CD4-positive, alpha-beta memory T cell (primary cell): ENCODE measurements at regions of chr6 and their contacts with region 1.

Region 1: GRCh38 chr6:28940858-28941680 is 17.3 kb upstream of the TRIM27 start:
- DNase-seq: peak; percentile 85 to 88 (median 86)
- H3K4me3 ChIP-seq: peak overlapping the region; percentile 62 to 77
- H3K4me3 Mint-ChIP-seq: peak overlapping the region; percentile 87 to 98 (median 95)
- H3K27ac ChIP-seq: peak overlapping the region; percentile 39
- H3K27ac Mint-ChIP-seq: peak overlapping the region; percentile 85 to 97 (median 94)
- H3K4me1 ChIP-seq: peaks cover 35% of the 10 kb centered on the region
- H3K4me1 Mint-ChIP-seq: peaks cover 26 to 57% (median 46%) of the 10 kb centered on the region in 4 donors
- H3K27me3 ChIP-seq: no peaks in the 10 kb centered on the region
- H3K27me3 Mint-ChIP-seq: peaks cover 0 to 10% of the 10 kb centered on the region in 2 donors

Region 2: GRCh38 chr6:27177485-27178406 is 1763.3 kb before region 1 on chr6:
- CTCF ChIA-PET with region 1: no interaction called
- POLR2A ChIA-PET with region 1: no interaction called
- intact Hi-C with region 1: loop called (anchors 10 kb)
- DNase-seq: peak; percentile 68 to 80 (median 70)
- H3K4me3 ChIP-seq: peak overlapping the region; percentile 98
- H3K4me3 Mint-ChIP-seq: peak overlapping the region; percentile 95 to 99 (median 98)
- H3K27ac ChIP-seq: peak overlapping the region; percentile 77
- H3K27ac Mint-ChIP-seq: peak overlapping the region; percentile 86 to 100 (median 93)
- H3K4me1 ChIP-seq: peaks cover 7% of the 10 kb centered on the region
- H3K4me1 Mint-ChIP-seq: peaks cover 5 to 29% (median 13%) of the 10 kb centered on the region in 4 donors
- H3K27me3 ChIP-seq: no peaks in the 10 kb centered on the region
- H3K27me3 Mint-ChIP-seq: peaks cover 3 to 4% of the 10 kb centered on the region in 2 donors

Region 3: DNA sequence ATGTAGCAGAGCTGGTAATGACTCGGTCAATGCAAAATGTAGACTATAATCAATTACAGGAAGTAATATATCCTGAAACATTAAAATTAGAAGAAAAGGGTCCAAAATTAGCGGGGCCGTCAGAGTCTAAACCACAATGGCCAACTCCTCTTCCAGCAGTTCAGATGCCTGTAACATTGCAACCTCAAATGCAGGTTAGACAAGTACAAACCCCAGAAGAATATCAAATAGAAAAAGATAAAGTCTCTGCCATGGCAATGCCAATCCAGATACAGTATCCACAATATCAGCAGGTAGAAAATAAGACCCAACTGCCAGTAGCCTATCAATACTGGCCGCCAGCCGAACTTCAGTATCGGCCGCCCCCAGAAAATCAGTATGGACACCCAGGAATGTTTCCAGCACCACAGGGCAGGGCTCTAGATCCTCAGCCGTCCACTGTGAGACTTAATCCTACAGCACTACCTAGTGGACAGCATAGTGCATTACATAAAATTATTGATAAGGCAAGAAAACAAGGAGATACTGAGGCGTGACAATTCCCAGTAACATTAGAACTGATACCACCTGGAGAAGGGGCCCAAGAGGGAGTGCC is 257.0 kb before region 1 on chr6:
- CTCF ChIA-PET with region 1: no interaction called
- POLR2A ChIA-PET with region 1: no interaction called
- intact Hi-C with region 1: loop called (anchors 2 kb)
- DNase-seq: peak in 4 of 5 donors; percentile 35 to 52 (median 44)
- H3K4me3 ChIP-seq: no peak overlapping the region
- H3K4me3 Mint-ChIP-seq: peak overlapping the region in 5 of 8 donors; percentile 14 to 76 (median 66)
- H3K27ac ChIP-seq: no peak overlapping the region
- H3K27ac Mint-ChIP-seq: peak overlapping the region in 1 of 7 donors; percentile 38
- H3K4me1 ChIP-seq: peaks cover 15% of the 10 kb centered on the region
- H3K4me1 Mint-ChIP-seq: peaks cover 9 to 21% (median 17%) of the 10 kb centered on the region in 4 donors
- H3K27me3 ChIP-seq: peaks cover 16% of the 10 kb centered on the region
- H3K27me3 Mint-ChIP-seq: peaks cover 38 to 49% of the 10 kb centered on the region in 2 donors

Region 4: GRCh38 chr6:28880894-28881780 is 59.9 kb before region 1 on chr6:
- CTCF ChIA-PET with region 1: interaction called, 7 read pairs
- POLR2A ChIA-PET with region 1: interaction called, 17 read pairs
- intact Hi-C with region 1: loop called (anchors 5 kb)
- DNase-seq: peak in 4 of 5 donors; percentile 21 to 46 (median 37)
- H3K4me3 ChIP-seq: no peak overlapping the region
- H3K4me3 Mint-ChIP-seq: peak overlapping the region; percentile 62 to 83 (median 76)
- H3K27ac ChIP-seq: no peak overlapping the region
- H3K27ac Mint-ChIP-seq: peak overlapping the region in 6 of 7 donors; percentile 18 to 94 (median 78)
- H3K4me1 ChIP-seq: peaks cover 24% of the 10 kb centered on the region
- H3K4me1 Mint-ChIP-seq: peaks cover 30 to 39% (median 35%) of the 10 kb centered on the region in 4 donors
- H3K27me3 ChIP-seq: no peaks in the 10 kb centered on the region
- H3K27me3 Mint-ChIP-seq: peaks cover 12 to 23% of the 10 kb centered on the region in 2 donors

Region 5: GRCh38 chr6:28923318-28924102 is 17.6 kb before region 1 on chr6 and contains the start of gene TRIM27:
- CTCF ChIA-PET with region 1: interaction called, 30 read pairs
- POLR2A ChIA-PET with region 1: interaction called, 133 read pairs
- intact Hi-C with region 1: loop called (anchors 1 kb)
- DNase-seq: peak; percentile 76 to 84 (median 78)
- H3K4me3 ChIP-seq: peak within 1 kb of the TSS; percentile 82 to 91
- H3K4me3 Mint-ChIP-seq: peak within 1 kb of the TSS; percentile 92 to 98 (median 95)
- H3K27ac ChIP-seq: peak within 1 kb of the TSS; percentile 82
- H3K27ac Mint-ChIP-seq: peak within 1 kb of the TSS; percentile 86 to 96 (median 94)
- H3K4me1 ChIP-seq: peaks cover 46% of the 10 kb centered on the region
- H3K4me1 Mint-ChIP-seq: peaks cover 30 to 49% (median 41%) of the 10 kb centered on the region in 4 donors
- H3K27me3 ChIP-seq: no peaks in the 10 kb centered on the region
- H3K27me3 Mint-ChIP-seq: peaks cover 0 to 2% of the 10 kb centered on the region in 2 donors
- total RNA-seq, gene TRIM27: 102 to 108 TPM

Region 6: DNA sequence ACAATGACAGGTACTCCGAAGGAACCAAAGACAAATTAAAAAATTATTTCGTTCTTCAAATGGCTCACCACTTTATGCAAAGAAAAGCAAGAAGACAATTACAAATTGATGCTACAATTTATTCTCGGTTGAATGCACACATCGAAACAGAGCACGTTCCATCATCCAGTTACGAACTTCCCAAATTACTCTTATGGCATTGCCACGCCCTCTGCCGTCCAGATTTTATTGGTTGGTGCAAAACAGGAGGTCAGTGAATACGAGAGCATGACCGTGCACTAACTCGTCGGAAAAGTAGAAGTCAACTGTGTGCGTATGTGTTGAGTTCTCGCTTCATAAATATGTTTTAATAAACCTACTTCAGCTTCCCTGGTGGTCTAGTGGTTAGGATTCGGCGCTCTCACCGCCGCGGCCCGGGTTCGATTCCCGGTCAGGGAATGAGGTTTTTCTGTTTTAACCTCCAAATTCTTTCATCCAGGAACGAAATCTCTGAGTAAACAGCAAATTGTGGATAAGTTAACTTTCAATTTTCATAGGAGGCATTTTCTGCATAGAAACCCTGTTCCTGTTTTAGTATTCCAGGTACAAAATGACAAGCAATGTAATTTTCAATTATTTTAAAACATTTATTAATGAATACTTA is 40.9 kb after region 1 on chr6:
- CTCF ChIA-PET with region 1: interaction called, 7 read pairs
- POLR2A ChIA-PET with region 1: interaction called, 9 read pairs
- intact Hi-C with region 1: loop called (anchors 1 kb)
- DNase-seq: peak; percentile 79 to 87 (median 84)
- H3K4me3 ChIP-seq: peak overlapping the region; percentile 99
- H3K4me3 Mint-ChIP-seq: peak overlapping the region; percentile 87 to 95 (median 94)
- H3K27ac ChIP-seq: no peak overlapping the region
- H3K27ac Mint-ChIP-seq: peak overlapping the region; percentile 84 to 100 (median 95)
- H3K4me1 ChIP-seq: peaks cover 28% of the 10 kb centered on the region
- H3K4me1 Mint-ChIP-seq: peaks cover 37 to 65% (median 46%) of the 10 kb centered on the region in 4 donors
- H3K27me3 ChIP-seq: no peaks in the 10 kb centered on the region
- H3K27me3 Mint-ChIP-seq: peaks cover 14 to 24% of the 10 kb centered on the region in 2 donors

Region 7: DNA sequence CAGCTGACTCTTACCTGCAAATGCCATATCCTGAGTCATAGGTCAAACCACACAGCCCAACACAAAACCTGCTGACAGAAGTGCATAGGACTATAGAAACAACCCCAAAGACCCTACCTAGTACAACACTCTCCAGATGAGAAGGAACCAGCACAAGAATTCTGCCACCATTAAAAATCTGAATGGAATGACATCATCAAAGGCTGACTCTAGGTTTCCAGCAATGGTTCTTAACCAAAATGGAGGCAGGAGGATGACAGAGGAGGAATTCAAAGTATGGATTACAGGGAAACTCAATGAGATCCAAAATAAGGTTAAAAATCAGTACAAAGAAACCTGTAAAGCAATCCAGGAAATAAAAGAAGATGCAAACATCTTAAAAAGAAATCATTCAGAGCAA is 391.6 kb after region 1 on chr6:
- CTCF ChIA-PET with region 1: no interaction called
- POLR2A ChIA-PET with region 1: no interaction called
- intact Hi-C with region 1: no loop called
- DNase-seq: no peak
- H3K4me3 ChIP-seq: no peak overlapping the region
- H3K4me3 Mint-ChIP-seq: no peak overlapping the region
- H3K27ac ChIP-seq: no peak overlapping the region
- H3K27ac Mint-ChIP-seq: no peak overlapping the region
- H3K4me1 ChIP-seq: no peaks in the 10 kb centered on the region
- H3K4me1 Mint-ChIP-seq: no peaks in the 10 kb centered on the region
- H3K27me3 ChIP-seq: no peaks in the 10 kb centered on the region
- H3K27me3 Mint-ChIP-seq: peaks cover 18 to 29% of the 10 kb centered on the region in 2 donors